Activated CD4-positive, alpha-beta T cell treated with anti-CD3 and anti-CD28 coated beads, Interleukin-2, amount 10 ng/mL, durations not matched to agents 24 days and 14 days (primary cell): ENCODE measurements at regions of chr20 and their contacts with region 1.

Region 1: DNA sequence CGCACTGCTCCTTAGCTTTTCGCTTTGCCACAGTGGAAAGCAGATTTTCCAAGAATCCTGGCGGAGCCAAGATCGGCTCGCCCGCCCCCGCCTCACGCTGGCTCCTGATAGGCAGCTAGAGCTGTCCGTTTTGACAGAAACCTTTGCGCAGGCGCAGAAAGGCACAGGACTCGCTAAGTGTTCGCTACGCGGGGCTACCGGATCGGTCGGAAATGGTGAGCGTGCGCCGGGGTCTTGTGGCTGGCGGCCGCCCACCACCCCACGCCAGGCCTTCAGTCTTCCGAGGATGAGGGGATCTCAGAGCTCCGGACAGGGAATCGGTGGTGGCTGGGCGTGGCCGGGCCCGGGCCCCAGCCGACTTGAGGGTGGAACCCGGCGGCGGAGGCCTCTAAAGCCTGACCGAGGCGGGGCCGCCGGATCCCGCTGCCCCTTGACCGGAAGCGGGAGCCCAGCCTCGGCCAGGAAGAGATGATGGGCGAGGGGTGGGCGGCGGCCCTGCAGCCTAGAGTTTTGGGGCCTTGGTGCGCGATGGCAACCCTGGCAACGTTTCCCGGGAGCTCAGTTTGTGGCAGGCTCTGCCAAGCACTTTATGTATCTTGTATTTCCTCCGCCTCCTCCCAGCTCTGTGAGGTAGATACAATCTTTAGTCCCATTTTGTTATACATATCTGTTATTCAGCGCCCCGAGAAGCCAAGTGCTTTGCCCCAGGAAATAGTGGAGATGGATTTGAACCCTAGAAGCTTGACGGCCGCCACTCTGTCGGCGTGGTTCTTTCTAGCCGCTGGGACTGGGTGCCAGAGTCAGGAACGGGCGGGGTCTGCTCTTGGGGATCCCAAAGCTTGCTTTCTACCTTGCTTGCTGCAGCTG is at the start of gene DYNLRB1:
- DNase-seq: peak; percentile 99
- H3K4me3 Mint-ChIP-seq: peak within 1 kb of the TSS; percentile 92
- H3K27ac Mint-ChIP-seq: peak within 1 kb of the TSS; percentile 98
- H3K4me1 Mint-ChIP-seq: peaks cover 24% of the 10 kb centered on the region
- H3K27me3 Mint-ChIP-seq: no peaks in the 10 kb centered on the region
- total RNA-seq, gene DYNLRB1: 96.5 and 98.9 TPM in 2 replicates

Region 2: DNA sequence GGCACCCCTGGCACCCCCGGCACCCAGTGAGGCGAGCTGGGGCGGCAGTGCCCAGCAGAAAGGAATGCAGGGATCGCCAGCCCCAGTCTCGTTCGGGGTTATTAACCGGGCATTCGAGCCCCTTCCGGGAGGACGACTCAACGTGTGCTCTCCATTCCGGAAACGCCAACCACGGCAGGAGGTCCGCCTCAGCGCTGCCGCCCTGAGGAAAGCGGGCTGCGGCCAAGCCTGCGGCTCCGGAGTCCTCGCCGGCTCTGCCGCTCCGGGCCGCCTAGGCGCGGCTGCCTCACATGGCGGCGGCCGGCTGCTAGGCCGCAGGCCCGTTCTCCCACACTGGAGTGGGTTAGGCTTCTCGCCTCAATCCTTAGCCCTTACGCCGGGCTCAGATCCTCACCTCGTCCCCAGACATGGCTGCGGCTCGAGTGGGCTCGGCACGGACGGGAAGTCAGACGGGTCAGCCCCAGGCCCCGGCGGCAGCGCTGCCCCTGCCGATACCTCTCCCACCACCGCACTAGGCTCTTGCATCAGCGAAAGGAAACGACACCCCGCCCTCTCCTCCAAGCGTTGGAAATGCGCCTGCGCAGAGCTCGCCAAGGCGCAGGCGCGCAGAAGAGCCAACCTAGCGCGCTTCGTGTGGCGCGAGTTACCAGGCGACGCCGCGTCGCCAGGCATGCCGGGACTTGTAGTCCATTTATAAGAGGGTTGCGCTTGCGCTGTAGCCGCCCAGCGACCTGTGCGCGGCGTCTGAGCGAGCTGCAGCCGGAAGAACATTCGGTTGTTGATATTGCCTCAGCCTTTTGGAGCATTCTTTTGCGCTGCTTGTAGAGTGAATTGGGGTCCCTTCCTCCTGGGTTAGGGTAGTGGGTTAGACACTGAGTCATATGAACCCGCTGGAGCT is 404.5 kb before region 1 on chr20 and contains the start of gene EIF2S2:
- intact Hi-C with region 1: loop called (anchors 2 kb)
- DNase-seq: peak; percentile 99
- H3K4me3 Mint-ChIP-seq: peak within 1 kb of the TSS; percentile 89
- H3K27ac Mint-ChIP-seq: peak within 1 kb of the TSS; percentile 98
- H3K4me1 Mint-ChIP-seq: peaks cover 35% of the 10 kb centered on the region
- H3K27me3 Mint-ChIP-seq: peaks cover 7% of the 10 kb centered on the region
- total RNA-seq, gene EIF2S2: 106 and 107 TPM in 2 replicates

Region 3: GRCh38 chr20:34302723-34303528 is 213.6 kb before region 1 on chr20 and contains the start of gene AHCY:
- intact Hi-C with region 1: loop called (anchors 2 kb)
- DNase-seq: peak; percentile 98
- H3K4me3 Mint-ChIP-seq: peak within 1 kb of the TSS; percentile 91
- H3K27ac Mint-ChIP-seq: peak within 1 kb of the TSS; percentile 94
- H3K4me1 Mint-ChIP-seq: peaks cover 18% of the 10 kb centered on the region
- H3K27me3 Mint-ChIP-seq: peaks cover 2% of the 10 kb centered on the region
- total RNA-seq, gene AHCY: 153 and 154 TPM in 2 replicates

Region 4: DNA sequence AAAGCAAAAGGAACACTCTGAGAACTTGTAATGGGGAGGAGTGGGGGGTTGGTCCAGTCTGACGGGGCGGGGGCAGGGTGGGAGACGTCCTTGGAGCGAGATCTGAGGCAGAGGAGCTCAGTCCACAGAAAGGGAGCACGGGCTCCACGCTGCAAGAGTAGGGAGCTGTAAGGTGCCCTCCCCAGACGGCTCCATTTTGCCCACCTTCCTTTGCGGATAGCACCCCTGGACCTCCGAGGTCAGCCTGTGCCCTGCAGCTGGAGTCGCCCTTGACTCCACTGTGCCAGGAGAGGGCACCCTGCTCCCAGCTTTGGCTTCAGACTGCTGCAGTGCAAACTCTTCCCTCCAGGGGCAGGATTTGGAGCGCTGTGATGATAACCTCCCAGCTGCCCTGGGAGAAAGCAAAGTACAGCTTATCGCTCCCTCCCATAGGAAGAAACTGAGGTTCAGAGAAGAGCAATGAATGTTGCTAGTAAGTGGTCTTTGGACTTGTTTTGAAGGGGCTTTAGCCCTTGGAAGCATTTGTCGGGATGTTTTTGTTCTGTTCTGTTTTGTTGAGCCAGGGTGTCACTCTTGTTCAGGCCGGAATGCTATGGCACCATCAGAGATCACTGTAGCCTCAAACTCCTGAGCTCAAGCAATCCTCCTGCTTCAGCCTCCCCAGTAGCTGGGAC is 203.8 kb before region 1 on chr20:
- intact Hi-C with region 1: loop called (anchors 1 kb)
- DNase-seq: peak; percentile 97
- H3K4me3 Mint-ChIP-seq: peak overlapping the region; percentile 40
- H3K27ac Mint-ChIP-seq: no peak overlapping the region
- H3K4me1 Mint-ChIP-seq: peaks cover 14% of the 10 kb centered on the region
- H3K27me3 Mint-ChIP-seq: peaks cover 21% of the 10 kb centered on the region

Region 5: DNA sequence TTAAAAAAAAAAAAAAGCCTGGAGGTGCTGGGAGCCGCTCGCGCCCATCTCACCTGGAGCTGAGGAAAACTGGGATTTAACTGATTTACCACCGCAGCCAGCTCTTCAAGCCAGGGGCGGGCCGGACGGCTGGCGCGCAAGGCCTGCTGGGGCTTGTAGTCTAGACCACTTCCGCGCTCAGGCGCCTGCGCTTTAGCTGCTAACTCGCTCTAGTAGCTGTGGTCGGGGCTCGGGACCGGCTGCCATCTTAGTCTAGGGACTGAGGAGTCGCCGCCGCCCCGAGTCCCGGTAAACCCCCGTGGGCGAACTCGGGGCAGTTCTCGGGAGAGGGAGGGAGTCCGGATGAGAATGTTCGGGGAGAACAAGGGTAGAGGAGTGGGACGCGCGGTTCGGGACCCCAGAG is 153.4 kb before region 1 on chr20 and contains the start of gene ITCH:
- intact Hi-C with region 1: loop called (anchors 5 kb)
- DNase-seq: peak; percentile 98
- H3K4me3 Mint-ChIP-seq: peak within 1 kb of the TSS; percentile 95
- H3K27ac Mint-ChIP-seq: peak within 1 kb of the TSS; percentile 98
- H3K4me1 Mint-ChIP-seq: peaks cover 33% of the 10 kb centered on the region
- H3K27me3 Mint-ChIP-seq: no peaks in the 10 kb centered on the region
- total RNA-seq, gene ITCH: 55.6 and 55.7 TPM in 2 replicates

Region 6: DNA sequence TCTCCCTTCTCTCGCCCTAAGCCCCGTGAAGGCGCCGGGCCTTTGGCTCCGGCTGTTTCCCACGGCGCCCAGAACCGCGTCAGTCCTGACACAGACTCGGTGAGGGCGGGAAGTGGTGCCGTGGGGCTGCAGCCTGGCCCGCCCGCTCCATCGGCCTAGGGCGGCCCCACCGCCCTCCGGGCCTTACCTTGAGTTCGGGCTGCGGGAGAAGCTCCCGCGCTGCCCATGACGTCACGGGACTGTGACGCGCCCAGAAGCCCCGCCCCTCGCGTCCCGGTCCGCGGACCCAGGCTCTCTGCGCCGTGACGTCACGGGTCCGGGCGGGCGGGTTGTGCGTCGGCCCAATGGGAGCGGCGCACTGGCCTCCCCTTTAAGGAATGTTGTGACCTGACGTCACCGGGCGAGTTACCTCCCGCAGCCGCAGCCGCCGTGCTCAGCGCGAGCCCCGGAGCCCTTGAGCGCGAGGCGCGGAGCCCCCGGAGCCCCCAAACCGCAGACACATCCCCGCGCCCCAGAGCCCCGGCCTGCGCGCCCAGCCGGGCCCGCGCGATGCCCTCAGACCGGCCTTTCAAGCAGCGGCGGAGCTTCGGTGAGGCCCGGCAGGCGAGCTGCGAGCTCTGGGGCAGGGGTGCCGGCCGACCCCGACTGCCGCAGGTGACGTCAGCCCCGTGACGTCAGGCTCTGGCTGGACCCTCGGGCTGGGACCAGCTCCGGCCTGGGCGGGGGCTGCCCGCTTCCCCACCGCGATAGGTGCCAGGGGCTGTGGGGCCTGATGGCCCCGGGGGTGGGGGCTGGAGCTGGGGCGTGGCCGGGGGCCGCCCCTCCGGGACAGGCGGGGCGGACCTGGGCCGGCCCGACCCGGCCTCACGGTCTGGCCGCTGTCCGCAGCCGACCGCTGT is 42.1 kb after region 1 on chr20 and contains the start of gene MAP1LC3A:
- intact Hi-C with region 1: loop called (anchors 1 kb)
- DNase-seq: peak; percentile 98
- H3K4me3 Mint-ChIP-seq: peak within 1 kb of the TSS; percentile 89
- H3K27ac Mint-ChIP-seq: peak within 1 kb of the TSS; percentile 90
- H3K4me1 Mint-ChIP-seq: peaks cover 7% of the 10 kb centered on the region
- H3K27me3 Mint-ChIP-seq: no peaks in the 10 kb centered on the region
- total RNA-seq, gene MAP1LC3A: 3.1 and 3.6 TPM in 2 replicates

Region 7: GRCh38 chr20:34604980-34605788 is 88.7 kb after region 1 on chr20:
- intact Hi-C with region 1: no loop called
- DNase-seq: no peak
- H3K4me3 Mint-ChIP-seq: no peak overlapping the region
- H3K27ac Mint-ChIP-seq: no peak overlapping the region
- H3K4me1 Mint-ChIP-seq: no peaks in the 10 kb centered on the region
- H3K27me3 Mint-ChIP-seq: no peaks in the 10 kb centered on the region

Region 8: DNA sequence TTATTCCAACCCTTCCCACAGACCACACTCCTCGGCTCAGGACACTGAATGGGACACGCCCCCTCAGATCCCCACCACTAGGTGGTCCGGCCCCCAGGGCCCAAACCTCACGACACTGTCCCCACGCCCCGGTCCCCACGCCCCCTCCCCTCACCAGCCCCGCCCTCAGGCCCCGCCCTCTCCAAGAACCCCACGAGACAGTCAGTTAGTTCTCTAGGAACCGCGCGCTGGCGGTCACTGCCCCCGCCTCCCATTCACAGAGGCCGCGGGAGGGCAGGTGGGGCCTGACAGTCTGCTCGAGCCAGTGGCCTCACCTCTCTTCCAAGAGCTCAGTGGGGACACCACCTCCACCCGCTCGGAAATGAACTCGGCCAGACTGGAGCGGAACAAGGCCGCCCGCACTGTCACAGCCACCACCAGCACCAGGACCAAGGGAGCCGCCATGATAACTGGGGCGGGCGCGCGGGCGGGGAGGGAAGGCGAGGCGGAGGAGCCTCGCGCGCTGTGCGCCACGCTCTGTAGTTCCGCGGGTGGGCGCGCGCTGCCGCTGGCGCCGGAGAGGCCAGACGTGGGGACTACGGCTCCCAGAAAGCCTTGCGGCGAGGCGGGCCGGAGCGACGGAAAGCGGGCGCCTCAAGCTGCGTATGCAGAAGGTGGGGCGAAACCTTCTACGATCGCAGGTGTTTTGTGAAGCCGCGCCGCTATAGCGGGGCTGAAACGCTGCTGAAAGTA is 160.3 kb after region 1 on chr20 and contains the start of gene PIGU:
- intact Hi-C with region 1: loop called (anchors 1 kb)
- DNase-seq: peak; percentile 99
- H3K4me3 Mint-ChIP-seq: peak within 1 kb of the TSS; percentile 92
- H3K27ac Mint-ChIP-seq: peak within 1 kb of the TSS; percentile 98
- H3K4me1 Mint-ChIP-seq: peaks cover 25% of the 10 kb centered on the region
- H3K27me3 Mint-ChIP-seq: no peaks in the 10 kb centered on the region
- total RNA-seq, gene PIGU: 26.4 and 27.1 TPM in 2 replicates